ENCODE measurements at regions of chr6 and their contacts with region 1.

Region 1: DNA sequence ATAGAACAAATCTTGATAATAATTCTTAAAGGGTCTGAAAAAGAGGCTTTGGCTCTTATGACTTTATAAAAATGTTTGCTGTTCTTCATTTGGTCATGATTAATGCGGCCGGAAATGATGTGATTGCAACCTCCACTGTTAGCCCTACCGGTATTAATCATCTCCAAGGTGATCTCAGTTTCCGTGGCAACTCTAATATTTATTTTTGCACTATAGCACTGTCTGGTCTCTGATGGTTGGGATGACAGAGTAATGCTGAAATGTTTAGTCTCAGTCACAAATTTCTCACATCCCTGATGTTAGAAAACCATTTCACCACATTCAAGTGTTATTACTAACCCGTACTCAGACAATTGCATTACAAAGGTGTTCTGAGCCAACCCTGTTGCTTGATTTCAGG is 87.4 kb downstream of the TMEM200A start:
- DNase-seq: no peak
- ATAC-seq: no peak
- H3K4me3 ChIP-seq: no peak overlapping the region
- H3K27ac ChIP-seq: no peak overlapping the region
- H3K4me1 ChIP-seq: no peaks in the 10 kb centered on the region
- H3K27me3 ChIP-seq: no peaks in the 10 kb centered on the region
- CTCF ChIP-seq: no peak
- POLR2A ChIP-seq: no peak

Region 2: GRCh38 chr6:130365166-130366106 is 87.8 kb before region 1 on chr6 and contains the start of gene TMEM200A:
- in situ Hi-C with region 1: loop called in 1 of 4 experiments (anchors 25 kb)
- intact Hi-C with region 1: no loop called
- DNase-seq: no peak
- ATAC-seq: no peak
- H3K4me3 ChIP-seq: peak within 1 kb of the TSS; percentile 48 to 59 (median 51)
- H3K27ac ChIP-seq: no peak within 1 kb of the TSS
- H3K4me1 ChIP-seq: no peaks in the 10 kb centered on the region
- H3K27me3 ChIP-seq: peaks cover 8 to 43% (median 24%) of the 10 kb centered on the region in 3 donors
- CTCF ChIP-seq: peak in 4 of 5 experiments; percentile 23 to 49 (median 42)
- POLR2A ChIP-seq: no peak
- total RNA-seq, gene TMEM200A: 0.16 to 0.29 TPM in 2 of 4 donors, not detected in the others

Region 3: GRCh38 chr6:130525408-130525807 is 72.2 kb after region 1 on chr6:
- in situ Hi-C with region 1: no loop called
- intact Hi-C with region 1: no loop called
- DNase-seq: no peak
- ATAC-seq: no peak
- H3K4me3 ChIP-seq: no peak overlapping the region
- H3K27ac ChIP-seq: no peak overlapping the region
- H3K4me1 ChIP-seq: no peaks in the 10 kb centered on the region
- H3K27me3 ChIP-seq: no peaks in the 10 kb centered on the region
- CTCF ChIP-seq: no peak
- POLR2A ChIP-seq: no peak

Region 4: DNA sequence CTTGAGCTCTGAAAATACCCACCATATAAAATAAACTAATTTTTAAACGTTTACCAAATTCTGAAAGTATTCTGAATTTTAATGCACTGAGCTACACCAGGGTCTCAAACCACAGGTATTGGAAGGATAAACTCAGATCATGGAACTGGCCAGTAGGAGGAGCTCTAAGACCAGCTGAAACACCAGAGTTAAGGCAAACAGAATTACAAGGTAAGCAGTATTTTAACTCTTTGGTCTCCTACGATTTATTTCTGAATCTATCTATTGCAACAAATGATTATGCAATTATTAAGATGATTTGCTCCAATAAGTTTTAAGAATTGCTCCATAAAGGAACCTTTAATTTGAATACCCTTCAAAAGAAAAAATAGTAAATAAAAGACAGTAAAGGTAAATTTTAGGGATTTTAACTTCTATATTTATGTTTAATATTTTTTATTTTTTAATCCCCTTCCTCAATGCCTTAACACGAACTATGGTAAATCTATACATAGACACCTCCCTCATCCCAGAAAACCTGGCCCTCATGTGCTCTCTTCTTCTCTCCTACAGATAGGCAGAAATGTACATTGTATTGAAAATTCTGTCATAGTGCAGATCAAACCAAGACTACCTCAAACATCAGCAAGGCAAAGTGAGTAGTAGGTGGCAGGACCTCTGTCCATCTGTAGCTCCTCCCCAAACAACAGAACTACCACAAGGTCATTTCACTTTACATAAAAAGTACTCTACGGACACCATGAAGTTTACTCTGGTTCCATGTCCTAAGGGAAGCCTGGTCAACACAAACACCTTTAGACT is 432.4 kb after region 1 on chr6:
- in situ Hi-C with region 1: no loop called
- intact Hi-C with region 1: no loop called
- DNase-seq: peak; percentile 43 to 45
- ATAC-seq: peak; percentile 86
- H3K4me3 ChIP-seq: no peak overlapping the region
- H3K27ac ChIP-seq: no peak overlapping the region
- H3K4me1 ChIP-seq: no peaks in the 10 kb centered on the region
- H3K27me3 ChIP-seq: no peaks in the 10 kb centered on the region
- CTCF ChIP-seq: peak; percentile 83 to 91 (median 88)
- POLR2A ChIP-seq: no peak